B cell (primary cell): ENCODE measurements at regions of chr20 and their contacts with region 1.

Region 1: GRCh38 chr20:31723319-31724078 is 831 bp upstream of the BCL2L1 start:
- DNase-seq: peak; percentile 100
- ATAC-seq: peak; percentile 91
- H3K4me3 ChIP-seq: peak overlapping the region; percentile 65 to 99 (median 88)
- H3K4me3 Mint-ChIP-seq: peak overlapping the region; percentile 92
- H3K27ac ChIP-seq: peak overlapping the region; percentile 84 to 97
- H3K27ac Mint-ChIP-seq: peak overlapping the region; percentile 95
- H3K4me1 ChIP-seq: peaks cover 37 to 40% of the 10 kb centered on the region in 2 donors
- H3K4me1 Mint-ChIP-seq: peaks cover 43% of the 10 kb centered on the region
- H3K27me3 ChIP-seq: no peaks in the 10 kb centered on the region
- H3K27me3 Mint-ChIP-seq: no peaks in the 10 kb centered on the region
- CTCF ChIP-seq: peak; percentile 83

Region 2: DNA sequence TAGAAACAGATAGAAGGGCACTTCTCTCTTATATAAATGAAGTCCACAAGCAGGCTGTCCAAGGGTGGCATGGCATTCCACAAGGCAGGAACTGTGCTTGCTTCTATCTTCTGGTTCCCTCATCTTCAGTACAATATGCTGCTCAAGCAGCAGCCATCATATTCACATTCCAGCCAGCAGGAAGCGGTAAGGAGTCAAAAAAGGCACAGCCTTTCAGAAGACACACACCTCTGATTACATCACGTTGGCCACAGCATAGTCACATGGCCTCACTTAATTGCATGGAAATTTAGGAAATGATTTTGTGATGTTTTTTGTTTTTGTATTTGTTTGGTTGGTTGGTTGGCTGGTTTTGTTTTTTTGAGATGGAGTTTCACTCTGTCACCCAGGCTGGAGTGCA is 229.4 kb before region 1 on chr20:
- CTCF ChIA-PET with region 1: no interaction called
- POLR2A ChIA-PET with region 1: no interaction called
- intact Hi-C with region 1: no loop called
- DNase-seq: no peak
- ATAC-seq: no peak
- H3K4me3 ChIP-seq: no peak overlapping the region
- H3K4me3 Mint-ChIP-seq: no peak overlapping the region
- H3K27ac ChIP-seq: no peak overlapping the region
- H3K27ac Mint-ChIP-seq: no peak overlapping the region
- H3K4me1 ChIP-seq: no peaks in the 10 kb centered on the region
- H3K4me1 Mint-ChIP-seq: no peaks in the 10 kb centered on the region
- H3K27me3 ChIP-seq: peaks cover 0 to 5% (median 3%) of the 10 kb centered on the region in 4 experiments
- H3K27me3 Mint-ChIP-seq: peaks cover 25% of the 10 kb centered on the region
- CTCF ChIP-seq: no peak

Region 3: DNA sequence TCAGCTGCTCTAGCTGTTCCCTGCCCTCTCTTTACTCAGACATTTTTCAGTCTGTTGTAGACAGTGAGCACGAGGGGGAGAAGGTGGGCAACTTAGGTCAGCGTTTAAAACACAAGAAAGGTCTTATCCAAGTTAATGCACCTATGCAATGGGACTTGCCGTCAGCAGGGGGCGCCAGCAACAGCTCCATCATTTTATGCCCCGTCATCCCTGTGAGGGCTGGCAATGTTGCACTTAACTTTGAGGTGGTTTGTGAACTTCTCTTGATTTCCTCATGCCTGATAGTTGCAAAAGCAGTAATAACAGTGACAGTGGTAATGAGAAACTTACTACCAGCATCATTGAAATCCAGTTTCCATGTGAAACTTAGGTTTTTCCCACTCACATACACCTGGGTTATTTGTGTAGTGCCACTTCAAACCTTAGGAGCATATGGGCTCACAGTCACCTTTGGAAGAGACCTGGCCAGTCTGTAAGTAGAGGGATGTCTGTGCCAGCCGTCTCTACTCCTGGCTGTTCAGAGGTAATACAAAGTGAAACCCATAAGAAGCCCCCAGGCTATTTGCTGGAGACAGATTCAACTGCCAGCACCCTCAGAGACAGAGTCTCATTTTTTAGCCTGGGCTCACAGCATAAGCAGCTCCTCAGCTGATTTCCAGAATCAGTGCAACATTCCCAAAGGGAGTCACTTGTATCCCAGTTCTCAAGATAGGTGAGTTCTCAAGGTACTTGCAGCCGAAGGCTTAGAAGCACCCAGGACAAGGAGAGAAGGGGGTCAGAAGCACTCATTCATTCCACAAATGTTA is 163.2 kb before region 1 on chr20:
- CTCF ChIA-PET with region 1: interaction called, 19 read pairs
- POLR2A ChIA-PET with region 1: interaction called, 3 read pairs
- intact Hi-C with region 1: loop called (anchors 2 kb)
- DNase-seq: peak; percentile 75
- ATAC-seq: peak; percentile 65
- H3K4me3 ChIP-seq: no peak overlapping the region
- H3K4me3 Mint-ChIP-seq: no peak overlapping the region
- H3K27ac ChIP-seq: no peak overlapping the region
- H3K27ac Mint-ChIP-seq: no peak overlapping the region
- H3K4me1 ChIP-seq: no peaks in the 10 kb centered on the region
- H3K4me1 Mint-ChIP-seq: no peaks in the 10 kb centered on the region
- H3K27me3 ChIP-seq: no peaks in the 10 kb centered on the region
- H3K27me3 Mint-ChIP-seq: no peaks in the 10 kb centered on the region
- CTCF ChIP-seq: peak; percentile 89

Region 4: DNA sequence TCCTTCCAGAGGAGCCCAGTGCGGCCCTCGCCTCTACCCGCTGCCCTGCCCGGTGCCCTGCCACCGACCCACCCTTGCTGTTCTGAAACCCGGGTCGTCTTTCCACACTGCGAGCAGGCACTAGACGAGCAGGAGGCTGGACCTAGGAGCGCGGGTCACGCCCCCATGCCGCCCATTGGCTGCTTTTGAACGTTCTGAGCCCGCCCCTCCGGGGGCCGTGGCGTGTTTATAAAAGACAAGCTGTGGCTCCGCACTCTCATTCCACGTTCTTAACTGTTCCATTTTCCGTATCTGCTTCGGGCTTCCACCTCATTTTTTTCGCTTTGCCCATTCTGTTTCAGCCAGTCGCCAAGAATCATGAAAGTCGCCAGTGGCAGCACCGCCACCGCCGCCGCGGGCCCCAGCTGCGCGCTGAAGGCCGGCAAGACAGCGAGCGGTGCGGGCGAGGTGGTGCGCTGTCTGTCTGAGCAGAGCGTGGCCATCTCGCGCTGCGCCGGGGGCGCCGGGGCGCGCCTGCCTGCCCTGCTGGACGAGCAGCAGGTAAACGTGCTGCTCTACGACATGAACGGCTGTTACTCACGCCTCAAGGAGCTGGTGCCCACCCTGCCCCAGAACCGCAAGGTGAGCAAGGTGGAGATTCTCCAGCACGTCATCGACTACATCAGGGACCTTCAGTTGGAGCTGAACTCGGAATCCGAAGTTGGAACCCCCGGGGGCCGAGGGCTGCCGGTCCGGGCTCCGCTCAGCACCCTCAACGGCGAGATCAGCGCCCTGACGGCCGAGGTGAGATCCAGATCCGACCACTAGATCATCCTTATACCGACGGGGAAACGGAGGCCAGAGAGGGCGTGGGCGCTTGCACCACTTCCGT is 118.2 kb before region 1 on chr20 and contains the start of gene ID1:
- CTCF ChIA-PET with region 1: interaction called, 11 read pairs
- POLR2A ChIA-PET with region 1: no interaction called
- intact Hi-C with region 1: loop called (anchors 2 kb)
- DNase-seq: peak; percentile 92
- ATAC-seq: peak; percentile 90
- H3K4me3 ChIP-seq: peak within 1 kb of the TSS; percentile 50 to 79 (median 66)
- H3K4me3 Mint-ChIP-seq: peak within 1 kb of the TSS; percentile 96
- H3K27ac ChIP-seq: peak within 1 kb of the TSS in 1 of 2 donors; percentile 24
- H3K27ac Mint-ChIP-seq: peak within 1 kb of the TSS; percentile 74
- H3K4me1 ChIP-seq: peaks cover 24 to 26% of the 10 kb centered on the region in 2 donors
- H3K4me1 Mint-ChIP-seq: peaks cover 29% of the 10 kb centered on the region
- H3K27me3 ChIP-seq: peaks cover 0 to 66% (median 35%) of the 10 kb centered on the region in 4 experiments
- H3K27me3 Mint-ChIP-seq: peaks cover 45% of the 10 kb centered on the region
- CTCF ChIP-seq: peak; percentile 1
- total RNA-seq, gene ID1: 3.4 and 4.4 TPM in 2 replicates

Region 5: GRCh38 chr20:31661625-31662371 is 61.7 kb before region 1 on chr20:
- CTCF ChIA-PET with region 1: interaction called, 455 read pairs
- POLR2A ChIA-PET with region 1: interaction called, 43 read pairs
- intact Hi-C with region 1: loop called (anchors 1 kb)
- DNase-seq: peak; percentile 87
- ATAC-seq: peak; percentile 96
- H3K4me3 ChIP-seq: peak overlapping the region; percentile 5 to 60 (median 52)
- H3K4me3 Mint-ChIP-seq: peak overlapping the region; percentile 69
- H3K27ac ChIP-seq: peak overlapping the region; percentile 29 to 48
- H3K27ac Mint-ChIP-seq: peak overlapping the region; percentile 85
- H3K4me1 ChIP-seq: peaks cover 7 to 17% of the 10 kb centered on the region in 2 donors
- H3K4me1 Mint-ChIP-seq: peaks cover 28% of the 10 kb centered on the region
- H3K27me3 ChIP-seq: no peaks in the 10 kb centered on the region
- H3K27me3 Mint-ChIP-seq: no peaks in the 10 kb centered on the region
- CTCF ChIP-seq: peak; percentile 80

Region 6: DNA sequence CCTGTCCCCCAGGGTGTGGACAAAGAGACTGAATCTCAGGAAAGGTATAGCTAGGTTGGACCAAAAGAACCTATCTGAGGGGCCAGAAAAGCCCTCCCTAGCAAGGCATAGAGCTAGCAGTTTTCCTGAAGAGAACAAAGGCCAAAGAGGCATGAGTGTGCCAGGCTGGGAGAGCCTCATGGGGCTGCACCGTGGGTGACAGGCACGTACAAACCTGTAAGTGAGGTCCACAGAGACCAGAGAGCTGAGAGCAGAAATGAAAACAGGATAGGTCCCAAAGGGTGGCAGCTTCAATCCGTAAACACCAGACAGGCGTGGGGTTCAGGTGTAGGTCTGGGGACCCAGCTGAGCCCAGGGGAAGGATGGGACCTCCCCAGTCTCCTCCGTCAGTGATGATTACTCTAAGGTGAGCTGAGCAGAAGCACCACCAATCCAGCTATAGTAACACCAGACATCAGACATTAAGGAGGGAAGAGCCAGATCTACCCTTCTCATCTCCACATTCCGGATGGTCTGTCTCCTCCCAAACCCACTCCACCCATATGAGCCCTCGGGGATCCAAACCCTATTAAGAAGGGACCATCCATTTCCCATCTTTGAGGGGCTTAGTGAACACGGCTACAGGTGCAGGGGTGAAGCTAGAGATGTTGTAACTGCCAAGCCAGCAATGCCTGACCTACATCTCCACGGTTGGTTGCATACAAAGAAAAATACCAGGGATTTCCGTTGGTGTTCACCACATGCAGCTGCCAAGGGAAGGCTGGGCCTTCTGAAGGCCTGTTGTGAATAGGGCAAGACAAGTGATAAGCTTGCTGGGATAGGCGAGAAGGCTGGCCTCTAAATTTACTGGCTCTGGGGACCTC is 39.1 kb before region 1 on chr20:
- CTCF ChIA-PET with region 1: interaction called, 30 read pairs
- POLR2A ChIA-PET with region 1: interaction called, 20 read pairs
- intact Hi-C with region 1: loop called (anchors 1 kb)
- DNase-seq: peak; percentile 56
- ATAC-seq: peak; percentile 76
- H3K4me3 ChIP-seq: peak overlapping the region in 2 of 5 experiments; percentile 4 to 56
- H3K4me3 Mint-ChIP-seq: peak overlapping the region; percentile 65
- H3K27ac ChIP-seq: peak overlapping the region; percentile 60 to 82
- H3K27ac Mint-ChIP-seq: peak overlapping the region; percentile 90
- H3K4me1 ChIP-seq: peaks cover 24 to 31% of the 10 kb centered on the region in 2 donors
- H3K4me1 Mint-ChIP-seq: peaks cover 40% of the 10 kb centered on the region
- H3K27me3 ChIP-seq: no peaks in the 10 kb centered on the region
- H3K27me3 Mint-ChIP-seq: no peaks in the 10 kb centered on the region
- CTCF ChIP-seq: no peak

Region 7: DNA sequence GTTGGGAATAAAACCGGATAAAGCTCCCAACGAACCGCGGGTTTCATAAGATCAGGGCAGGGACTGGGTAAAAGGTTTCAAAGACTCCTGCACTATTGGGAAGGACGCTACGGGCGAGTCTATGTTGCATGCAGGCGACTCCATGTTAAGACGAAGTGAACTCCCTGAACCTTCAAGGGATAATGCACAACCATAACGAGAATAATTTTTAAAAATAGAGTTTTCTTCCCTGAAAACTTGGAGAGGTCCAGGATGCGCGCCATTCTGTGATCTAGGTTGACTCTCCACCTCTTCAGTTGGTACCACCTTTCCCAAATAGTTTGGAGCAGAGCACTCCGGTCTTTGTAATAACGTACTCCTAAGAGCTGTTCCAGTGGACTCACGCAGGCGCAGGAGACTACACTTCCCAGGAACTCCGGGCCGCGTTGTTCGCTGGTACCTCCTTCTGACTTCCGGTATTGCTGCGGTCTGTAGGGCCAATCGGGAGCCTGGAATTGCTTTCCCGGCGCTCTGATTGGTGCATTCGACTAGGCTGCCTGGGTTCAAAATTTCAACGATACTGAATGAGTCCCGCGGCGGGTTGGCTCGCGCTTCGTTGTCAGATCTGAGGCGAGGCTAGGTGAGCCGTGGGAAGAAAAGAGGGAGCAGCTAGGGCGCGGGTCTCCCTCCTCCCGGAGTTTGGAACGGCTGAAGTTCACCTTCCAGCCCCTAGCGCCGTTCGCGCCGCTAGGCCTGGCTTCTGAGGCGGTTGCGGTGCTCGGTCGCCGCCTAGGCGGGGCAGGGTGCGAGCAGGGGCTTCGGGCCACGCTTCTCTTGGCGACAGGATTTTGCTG is 15.4 kb after region 1 on chr20 and contains the start of gene TPX2:
- CTCF ChIA-PET with region 1: interaction called, 29 read pairs
- POLR2A ChIA-PET with region 1: interaction called, 8 read pairs
- intact Hi-C with region 1: loop called (anchors 1 kb)
- DNase-seq: peak; percentile 85
- ATAC-seq: peak; percentile 99
- H3K4me3 ChIP-seq: peak within 1 kb of the TSS; percentile 52 to 87 (median 83)
- H3K4me3 Mint-ChIP-seq: peak within 1 kb of the TSS; percentile 35
- H3K27ac ChIP-seq: peak within 1 kb of the TSS in 1 of 2 donors; percentile 40
- H3K27ac Mint-ChIP-seq: no peak within 1 kb of the TSS
- H3K4me1 ChIP-seq: peaks cover 6 to 18% of the 10 kb centered on the region in 2 donors
- H3K4me1 Mint-ChIP-seq: no peaks in the 10 kb centered on the region
- H3K27me3 ChIP-seq: no peaks in the 10 kb centered on the region
- H3K27me3 Mint-ChIP-seq: no peaks in the 10 kb centered on the region
- CTCF ChIP-seq: no peak
- total RNA-seq, gene TPX2: 0.30 and 0.41 TPM in 2 replicates

Region 8: GRCh38 chr20:31860710-31861345 is 137.3 kb after region 1 on chr20:
- CTCF ChIA-PET with region 1: no interaction called
- POLR2A ChIA-PET with region 1: no interaction called
- intact Hi-C with region 1: no loop called
- DNase-seq: no peak
- ATAC-seq: peak; percentile 24
- H3K4me3 ChIP-seq: peak overlapping the region in 4 of 5 experiments; percentile 42 to 61 (median 54)
- H3K4me3 Mint-ChIP-seq: peak overlapping the region; percentile 55
- H3K27ac ChIP-seq: no peak overlapping the region
- H3K27ac Mint-ChIP-seq: no peak overlapping the region
- H3K4me1 ChIP-seq: peaks cover 19 to 26% of the 10 kb centered on the region in 2 donors
- H3K4me1 Mint-ChIP-seq: peaks cover 29% of the 10 kb centered on the region
- H3K27me3 ChIP-seq: peaks cover 0 to 18% (median 10%) of the 10 kb centered on the region in 4 experiments
- H3K27me3 Mint-ChIP-seq: peaks cover 5% of the 10 kb centered on the region
- CTCF ChIP-seq: no peak

Region 9: GRCh38 chr20:31923388-31924331 is 200.2 kb after region 1 on chr20:
- CTCF ChIA-PET with region 1: no interaction called
- POLR2A ChIA-PET with region 1: no interaction called
- intact Hi-C with region 1: no loop called
- DNase-seq: peak; percentile 20
- ATAC-seq: no peak
- H3K4me3 ChIP-seq: no peak overlapping the region
- H3K4me3 Mint-ChIP-seq: no peak overlapping the region
- H3K27ac ChIP-seq: no peak overlapping the region
- H3K27ac Mint-ChIP-seq: peak overlapping the region; percentile 6
- H3K4me1 ChIP-seq: peaks cover 0 to 6% of the 10 kb centered on the region in 2 donors
- H3K4me1 Mint-ChIP-seq: peaks cover 9% of the 10 kb centered on the region
- H3K27me3 ChIP-seq: peaks cover 0 to 8% (median 1%) of the 10 kb centered on the region in 4 experiments
- H3K27me3 Mint-ChIP-seq: peaks cover 16% of the 10 kb centered on the region
- CTCF ChIP-seq: no peak